Activated CD4-positive, alpha-beta memory T cell treated with anti-CD3 and anti-CD28 coated beads for 36 hours (primary cell): ENCODE measurements at regions of chr17 and their contacts with region 1.

Region 1: DNA sequence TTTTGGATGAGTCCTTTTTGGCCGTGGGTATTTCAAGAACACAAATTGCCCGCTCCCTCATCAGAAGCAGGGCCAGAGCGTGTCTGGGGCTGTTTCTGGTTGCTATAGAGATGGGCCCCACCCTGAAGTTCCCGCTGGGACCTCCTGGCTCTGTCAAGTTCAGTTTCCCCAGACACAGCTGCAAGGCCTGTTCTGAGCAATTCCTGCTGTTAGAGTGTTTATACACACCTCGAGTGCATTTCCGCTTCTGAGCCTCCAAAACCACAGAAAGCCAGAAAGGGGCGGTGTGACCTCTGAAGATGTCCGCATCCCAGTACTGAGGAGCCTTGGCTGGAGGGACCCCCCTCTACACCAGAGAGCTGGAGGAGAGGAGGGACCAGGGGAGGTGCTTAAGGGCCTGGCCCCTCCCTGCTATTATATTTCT is 9.3 kb upstream of the WBP2 start:
- DNase-seq: peak; percentile 75
- H3K4me3 Mint-ChIP-seq: peak overlapping the region; percentile 24
- H3K27ac Mint-ChIP-seq: peak overlapping the region; percentile 70
- H3K4me1 Mint-ChIP-seq: peaks cover 25% of the 10 kb centered on the region
- H3K27me3 Mint-ChIP-seq: no peaks in the 10 kb centered on the region

Region 2: GRCh38 chr17:75764711-75765421 is 99.6 kb before region 1 on chr17 and contains the start of gene GALK1:
- CTCF ChIA-PET with region 1: interaction called, 13 read pairs
- POLR2A ChIA-PET with region 1: no interaction called
- intact Hi-C with region 1: no loop called
- DNase-seq: peak; percentile 83
- H3K4me3 Mint-ChIP-seq: peak within 1 kb of the TSS; percentile 79
- H3K27ac Mint-ChIP-seq: peak within 1 kb of the TSS; percentile 71
- H3K4me1 Mint-ChIP-seq: peaks cover 11% of the 10 kb centered on the region
- H3K27me3 Mint-ChIP-seq: no peaks in the 10 kb centered on the region
- total RNA-seq, gene GALK1: 69.3 to 69.7 TPM

Region 3: GRCh38 chr17:75827252-75828115 is 37.0 kb before region 1 on chr17:
- CTCF ChIA-PET with region 1: interaction called, 13 read pairs
- POLR2A ChIA-PET with region 1: no interaction called
- intact Hi-C with region 1: no loop called
- DNase-seq: peak; percentile 79
- H3K4me3 Mint-ChIP-seq: peak overlapping the region; percentile 46
- H3K27ac Mint-ChIP-seq: peak overlapping the region; percentile 87
- H3K4me1 Mint-ChIP-seq: peaks cover 15% of the 10 kb centered on the region
- H3K27me3 Mint-ChIP-seq: no peaks in the 10 kb centered on the region

Region 4: DNA sequence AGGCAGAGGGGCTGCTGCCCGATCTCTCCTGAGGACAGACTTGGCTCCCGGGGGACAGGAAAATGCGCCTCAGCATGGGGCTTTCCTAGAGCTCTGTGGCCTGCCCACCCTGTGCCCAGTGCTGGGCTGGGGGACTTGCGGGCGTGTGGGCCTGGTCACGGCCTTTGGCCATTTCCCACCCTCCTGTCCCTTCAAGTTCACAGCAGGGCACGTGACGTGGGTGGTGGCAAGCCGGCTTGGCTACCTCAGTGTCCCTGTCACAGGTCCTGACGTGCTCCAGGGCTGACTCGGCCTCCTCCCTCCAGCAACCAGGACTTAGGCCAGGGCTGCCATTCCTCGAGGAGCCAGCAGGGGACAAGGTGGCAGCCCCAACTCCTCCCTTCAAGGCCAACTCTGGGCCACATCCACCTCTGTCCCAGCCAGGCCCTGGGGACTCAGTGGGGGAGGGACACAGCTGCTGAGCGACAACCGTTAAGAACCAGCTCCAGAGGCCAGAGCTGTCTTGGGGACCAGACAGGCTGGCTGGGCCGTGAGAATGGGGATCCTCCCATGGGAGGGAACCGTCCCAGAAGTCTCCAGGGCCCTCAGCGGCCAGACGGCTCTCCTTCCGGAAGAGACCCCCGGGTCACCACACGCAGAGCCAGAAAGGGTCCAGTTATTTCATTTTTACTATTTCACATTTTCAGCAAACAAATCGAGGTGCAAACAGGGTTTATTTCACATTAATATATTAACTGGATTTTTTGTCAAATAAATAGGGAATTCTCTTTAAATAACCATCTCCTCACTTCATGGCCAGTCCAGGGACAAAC is 19.2 kb before region 1 on chr17:
- CTCF ChIA-PET with region 1: interaction called, 15 read pairs
- POLR2A ChIA-PET with region 1: interaction called, 5 read pairs
- intact Hi-C with region 1: no loop called
- DNase-seq: peak; percentile 83
- H3K4me3 Mint-ChIP-seq: peak overlapping the region; percentile 57
- H3K27ac Mint-ChIP-seq: peak overlapping the region; percentile 95
- H3K4me1 Mint-ChIP-seq: peaks cover 21% of the 10 kb centered on the region
- H3K27me3 Mint-ChIP-seq: no peaks in the 10 kb centered on the region

Region 5: GRCh38 chr17:75877752-75878173 is 13.3 kb after region 1 on chr17:
- CTCF ChIA-PET with region 1: interaction called, 111 read pairs
- POLR2A ChIA-PET with region 1: interaction called, 4 read pairs
- intact Hi-C with region 1: loop called (anchors 1 kb)
- DNase-seq: peak; percentile 81
- H3K4me3 Mint-ChIP-seq: peak overlapping the region; percentile 89
- H3K27ac Mint-ChIP-seq: peak overlapping the region; percentile 92
- H3K4me1 Mint-ChIP-seq: peaks cover 33% of the 10 kb centered on the region
- H3K27me3 Mint-ChIP-seq: no peaks in the 10 kb centered on the region

Region 6: DNA sequence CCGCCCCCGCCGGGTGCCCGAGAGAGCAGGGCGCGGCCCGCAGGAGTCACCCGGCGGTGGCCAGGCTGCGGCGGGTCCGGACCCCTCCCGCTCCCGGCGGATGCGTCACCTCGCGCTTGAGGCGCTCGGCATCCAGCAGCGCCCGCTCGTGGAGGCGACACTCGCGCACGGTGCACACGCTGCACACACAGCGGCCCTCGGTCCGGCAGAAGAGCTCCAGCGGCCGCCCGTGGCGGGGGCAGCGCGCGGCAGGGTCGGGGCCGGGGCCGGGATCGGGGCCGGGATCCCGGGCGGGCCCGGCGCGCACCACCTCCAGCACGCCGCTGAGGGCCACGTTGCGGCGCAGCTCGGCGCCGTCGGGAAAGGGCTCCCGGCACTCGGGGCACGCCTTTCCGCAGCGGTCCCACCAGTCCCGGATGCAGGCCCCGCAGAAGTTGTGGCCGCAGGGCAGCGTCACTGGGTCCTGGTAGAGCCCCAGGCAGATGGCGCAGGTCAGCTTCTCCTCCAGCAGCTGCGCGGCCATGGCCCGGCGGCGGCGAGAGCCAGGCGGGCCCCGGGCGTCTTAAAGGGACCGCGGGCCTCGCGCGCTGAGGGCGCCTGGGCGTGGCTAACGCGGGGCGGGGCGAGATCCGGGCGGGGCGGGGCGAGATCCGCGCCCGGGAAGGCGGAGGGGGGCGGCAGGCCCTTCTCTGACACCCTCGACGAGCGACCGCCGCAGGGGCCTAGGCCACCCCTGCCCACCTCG is 32.1 kb after region 1 on chr17 and contains the start of gene TRIM65:
- CTCF ChIA-PET with region 1: interaction called, 13 read pairs
- POLR2A ChIA-PET with region 1: no interaction called
- intact Hi-C with region 1: loop called (anchors 2 kb)
- DNase-seq: peak; percentile 87
- H3K4me3 Mint-ChIP-seq: peak within 1 kb of the TSS; percentile 84
- H3K27ac Mint-ChIP-seq: peak within 1 kb of the TSS; percentile 72
- H3K4me1 Mint-ChIP-seq: peaks cover 24% of the 10 kb centered on the region
- H3K27me3 Mint-ChIP-seq: no peaks in the 10 kb centered on the region
- total RNA-seq, gene TRIM65: 27.5 to 28.2 TPM

Region 7: DNA sequence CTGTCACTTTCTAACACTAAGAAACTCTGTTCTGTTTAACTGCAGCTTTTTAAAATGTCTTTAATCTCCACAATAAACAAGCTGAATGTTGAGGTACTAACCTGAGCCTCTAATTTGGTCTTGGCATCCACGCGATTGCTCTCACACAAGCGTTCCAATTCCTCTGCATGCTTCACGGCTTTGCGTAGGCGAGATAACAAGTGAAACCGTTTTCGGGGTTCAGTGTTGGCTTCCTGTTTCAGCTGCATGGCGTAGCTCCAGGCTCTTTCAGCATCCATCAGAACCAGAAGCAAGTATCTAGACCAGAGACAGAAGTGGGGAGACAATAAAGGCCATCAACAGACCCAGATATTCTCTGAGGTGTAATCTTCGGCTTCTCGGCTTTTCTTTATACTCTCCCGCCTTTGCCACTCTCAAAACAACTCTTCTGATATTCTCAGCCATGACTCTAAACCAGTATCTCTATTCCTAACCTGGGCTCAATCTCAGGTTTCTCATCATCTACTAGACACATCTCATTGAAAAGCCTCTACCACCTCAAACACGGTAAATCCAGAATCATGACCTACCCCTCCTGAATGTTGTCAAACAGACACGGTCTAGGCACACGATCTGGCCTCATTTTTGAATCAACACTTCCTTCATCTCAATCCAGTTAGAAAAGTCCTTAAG is 199.6 kb after region 1 on chr17:
- CTCF ChIA-PET with region 1: no interaction called
- POLR2A ChIA-PET with region 1: no interaction called
- intact Hi-C with region 1: no loop called
- DNase-seq: peak; percentile 80
- H3K4me3 Mint-ChIP-seq: peak overlapping the region; percentile 25
- H3K27ac Mint-ChIP-seq: peak overlapping the region; percentile 84
- H3K4me1 Mint-ChIP-seq: peaks cover 31% of the 10 kb centered on the region
- H3K27me3 Mint-ChIP-seq: no peaks in the 10 kb centered on the region

Region 8: DNA sequence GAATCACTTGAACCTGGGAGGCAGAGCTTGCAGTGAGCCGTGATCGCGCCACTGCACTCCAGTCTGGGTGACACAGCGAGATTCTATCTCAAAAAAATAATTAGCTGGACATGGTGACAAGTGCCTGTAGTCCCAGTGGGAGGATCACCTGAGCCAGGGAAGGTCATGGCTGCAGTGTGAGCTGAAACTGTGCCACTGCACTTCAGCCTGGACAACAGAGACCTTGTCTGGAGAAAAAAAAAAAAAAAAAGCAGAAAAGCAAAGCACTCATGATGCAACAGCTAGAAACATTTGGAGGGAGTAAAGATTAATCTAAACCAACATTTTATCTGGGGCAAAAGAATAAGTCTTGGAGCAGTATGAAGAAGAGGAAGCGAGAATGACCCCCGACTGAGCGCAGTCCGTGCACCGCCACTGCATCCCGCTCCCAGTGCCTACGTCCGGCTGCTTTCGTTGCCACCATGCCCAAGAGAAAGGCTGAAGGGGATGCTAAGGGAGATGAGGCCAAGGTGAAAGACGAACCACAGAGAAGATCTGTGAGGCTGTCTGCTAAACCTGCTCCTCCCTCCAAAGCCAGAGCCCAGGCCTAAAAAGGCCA is 481.0 kb after region 1 on chr17:
- CTCF ChIA-PET with region 1: no interaction called
- POLR2A ChIA-PET with region 1: no interaction called
- intact Hi-C with region 1: no loop called
- DNase-seq: no peak
- H3K4me3 Mint-ChIP-seq: no peak overlapping the region
- H3K27ac Mint-ChIP-seq: no peak overlapping the region
- H3K4me1 Mint-ChIP-seq: no peaks in the 10 kb centered on the region
- H3K27me3 Mint-ChIP-seq: no peaks in the 10 kb centered on the region